ENCODE measurements at regions of chr7 and their contacts with region 1.

Region 1: GRCh38 chr7:31234836-31235605 is 105.5 kb downstream of the NEUROD6 start:
- DNase-seq: no peak
- H3K4me3 ChIP-seq: no peak overlapping the region
- H3K27me3 ChIP-seq: no peaks in the 10 kb centered on the region
- CTCF ChIP-seq: no peak

Region 2: DNA sequence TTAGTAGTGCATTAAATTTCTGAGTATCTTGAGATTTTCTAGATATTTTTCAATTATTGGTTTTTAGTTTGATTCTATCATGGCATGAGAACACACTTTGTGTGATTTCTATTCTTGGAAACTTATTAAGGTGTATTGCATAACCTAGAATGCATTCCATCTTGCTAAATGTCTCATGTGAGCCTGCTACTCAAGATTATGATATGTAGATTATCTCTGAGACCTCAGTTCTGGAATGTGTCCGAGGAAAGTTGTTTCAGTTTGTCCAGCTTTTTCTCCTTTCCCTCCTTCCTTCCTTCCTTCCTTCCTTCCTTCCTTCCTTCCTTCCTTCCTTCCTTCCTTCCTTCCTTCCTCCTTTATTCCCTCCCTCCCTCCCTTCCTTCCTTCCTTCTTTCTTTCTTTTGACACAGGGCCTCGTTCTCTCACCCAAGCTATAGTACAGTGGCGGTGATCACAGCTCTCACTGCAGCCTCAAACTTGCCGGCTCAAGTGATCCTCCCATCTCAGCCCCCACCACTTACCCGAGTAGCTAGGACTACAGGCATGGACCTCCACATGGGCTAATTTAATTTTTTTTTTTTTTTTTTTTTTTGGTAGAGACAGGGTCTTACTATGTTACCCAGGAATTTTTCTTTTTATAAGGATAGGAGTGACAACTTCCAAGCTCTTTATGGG is 286.5 kb after region 1 on chr7:
- CTCF ChIA-PET with region 1: no interaction called
- POLR2A ChIA-PET with region 1: interaction called, 15 read pairs
- DNase-seq: no peak
- H3K4me3 ChIP-seq: no peak overlapping the region
- H3K27me3 ChIP-seq: no peaks in the 10 kb centered on the region
- CTCF ChIP-seq: no peak